Panc1 (cell line): ENCODE measurements at regions of chrX and their contacts with region 1.

Region 1: DNA sequence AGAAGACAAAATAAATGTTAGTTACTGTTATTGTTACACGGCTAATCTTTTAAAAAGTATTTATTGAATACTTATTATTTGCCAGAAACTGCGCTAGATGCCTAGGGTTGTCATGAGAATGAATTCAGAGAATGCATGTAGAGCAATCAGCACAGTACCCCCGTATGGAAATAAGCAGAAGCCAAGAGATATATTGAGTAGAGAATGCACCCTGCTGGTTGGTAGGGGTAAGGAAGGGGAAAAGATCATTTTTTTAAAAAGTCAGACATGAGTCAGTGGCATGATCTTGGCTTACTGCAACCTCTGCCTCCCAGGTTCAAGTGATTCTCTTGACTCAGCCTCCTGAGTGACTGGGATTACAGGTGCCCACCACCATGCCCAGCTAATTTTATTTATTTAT is 13.1 kb upstream of the DRP2 start:
- DNase-seq: peak; percentile 22
- ATAC-seq: peak; percentile 91
- H3K4me3 ChIP-seq: no peak overlapping the region
- H3K27ac ChIP-seq: no peak overlapping the region
- H3K4me1 ChIP-seq: no peaks in the 10 kb centered on the region
- H3K27me3 ChIP-seq: no peaks in the 10 kb centered on the region; the same call in 1 of the 2 replicates
- CTCF ChIP-seq: peak; percentile 54

Region 2: DNA sequence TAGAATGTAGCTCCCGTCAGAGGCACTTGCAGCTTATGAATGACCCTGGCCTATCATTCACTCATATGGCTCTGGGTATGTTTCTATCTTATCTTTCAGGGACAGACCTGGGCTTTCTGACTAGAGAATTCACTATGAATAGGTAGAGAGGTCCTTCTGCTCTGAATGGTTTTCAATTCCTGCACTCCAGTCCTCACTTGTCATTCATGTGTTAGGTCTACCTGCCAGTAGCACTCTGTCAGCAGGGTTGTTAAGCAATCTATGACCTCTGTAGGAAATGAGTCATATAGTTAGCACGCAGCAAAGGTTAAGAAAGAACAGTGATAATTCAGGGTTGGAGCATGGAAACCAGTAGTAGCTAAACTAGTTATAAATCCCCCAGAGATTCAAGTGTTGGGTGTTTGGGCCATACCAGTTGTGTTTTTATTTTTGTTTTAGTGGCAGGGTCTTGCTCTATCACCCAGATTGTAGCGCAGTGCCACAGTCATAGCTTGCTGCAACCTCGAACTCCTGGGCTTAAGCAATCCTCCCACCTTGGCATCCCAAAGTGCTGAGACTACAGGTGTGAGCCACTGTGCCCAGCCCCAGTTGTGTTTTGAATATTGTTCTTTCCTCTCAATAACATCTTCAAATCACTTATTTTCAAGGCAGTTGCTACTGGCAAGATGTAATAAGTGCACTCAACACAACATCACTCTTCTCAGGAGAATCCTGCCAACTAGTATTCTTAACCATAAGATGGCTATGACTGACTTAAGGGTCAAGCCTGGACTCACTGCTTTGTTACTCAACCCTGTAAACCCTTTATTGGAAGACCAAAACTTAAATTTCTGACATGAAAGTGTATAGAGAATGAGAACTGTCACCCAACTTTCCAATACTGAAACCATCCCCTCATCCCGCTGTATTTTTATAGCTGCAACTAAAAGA is 211.9 kb before region 1 on chrX:
- CTCF ChIA-PET with region 1: no interaction called
- POLR2A ChIA-PET with region 1: no interaction called
- in situ Hi-C with region 1: no loop called
- intact Hi-C with region 1: no loop called
- DNase-seq: peak; percentile 47
- ATAC-seq: peak; percentile 86
- H3K4me3 ChIP-seq: no peak overlapping the region
- H3K27ac ChIP-seq: no peak overlapping the region
- H3K4me1 ChIP-seq: no peaks in the 10 kb centered on the region
- H3K27me3 ChIP-seq: no peaks in the 10 kb centered on the region
- CTCF ChIP-seq: no peak

Region 3: GRCh38 chrX:101160001-101160400 is 46.5 kb before region 1 on chrX:
- CTCF ChIA-PET with region 1: no interaction called
- POLR2A ChIA-PET with region 1: interaction called, 11 read pairs
- in situ Hi-C with region 1: no loop called
- intact Hi-C with region 1: no loop called
- DNase-seq: no peak
- ATAC-seq: no peak
- H3K4me3 ChIP-seq: no peak overlapping the region
- H3K27ac ChIP-seq: no peak overlapping the region
- H3K4me1 ChIP-seq: no peaks in the 10 kb centered on the region
- H3K27me3 ChIP-seq: no peaks in the 10 kb centered on the region
- CTCF ChIP-seq: no peak

Region 4: DNA sequence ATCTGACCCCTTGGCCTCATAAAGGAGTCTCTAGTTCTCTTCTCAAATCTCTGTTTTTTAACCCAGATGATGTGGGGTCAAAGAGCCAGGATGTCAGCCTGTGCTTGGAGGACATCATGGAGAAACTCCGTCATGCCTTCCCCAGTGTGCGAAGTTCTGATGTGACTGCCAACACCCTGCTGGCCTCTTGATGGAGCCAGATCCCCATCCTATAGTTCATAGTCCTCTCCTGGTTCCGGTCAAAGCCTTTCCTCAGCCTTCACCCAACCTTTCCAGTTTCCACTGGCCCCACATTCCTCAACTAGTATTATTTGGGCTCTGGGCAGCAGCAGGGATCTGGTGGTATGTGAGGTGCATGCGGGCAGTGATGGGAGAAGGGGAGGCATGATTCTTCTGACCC is 54.0 kb after region 1 on chrX:
- CTCF ChIA-PET with region 1: no interaction called
- POLR2A ChIA-PET with region 1: no interaction called
- in situ Hi-C with region 1: loop called (anchors 10 kb)
- intact Hi-C with region 1: no loop called
- DNase-seq: no peak
- ATAC-seq: peak; percentile 96
- H3K4me3 ChIP-seq: no peak overlapping the region
- H3K27ac ChIP-seq: no peak overlapping the region
- H3K4me1 ChIP-seq: no peaks in the 10 kb centered on the region
- H3K27me3 ChIP-seq: no peaks in the 10 kb centered on the region
- CTCF ChIP-seq: peak; percentile 80